ENCODE measurements at regions of chr12 and their contacts with region 1.

Region 1: GRCh38 chr12:45543906-45544315 is 185.6 kb upstream of the ARID2 start:
- DNase-seq: peak; percentile 46
- H3K4me3 Mint-ChIP-seq: no peak overlapping the region
- H3K27ac Mint-ChIP-seq: no peak overlapping the region
- H3K4me1 Mint-ChIP-seq: no peaks in the 10 kb centered on the region
- H3K27me3 Mint-ChIP-seq: peaks cover 36% of the 10 kb centered on the region

Region 2: DNA sequence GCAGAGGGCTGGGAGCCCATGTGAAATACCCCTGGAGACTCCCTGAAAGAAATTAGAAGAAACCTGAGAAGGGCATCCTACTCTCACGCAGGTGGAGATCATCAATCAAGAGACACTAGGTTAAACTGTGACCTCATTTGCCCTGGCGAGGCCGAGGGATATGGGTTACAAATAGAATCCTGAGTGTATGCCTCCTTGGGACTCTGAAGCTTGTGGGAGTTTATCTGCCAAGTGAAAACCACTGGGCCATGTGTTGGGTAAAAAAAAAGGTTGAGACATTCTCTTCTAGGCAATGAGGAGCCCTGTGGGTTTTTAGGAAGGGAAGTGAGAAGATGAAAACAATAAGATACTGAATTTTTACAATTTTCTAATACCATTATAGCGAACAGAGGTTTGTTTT is 24.9 kb after region 1 on chr12:
- intact Hi-C with region 1: no loop called
- DNase-seq: no peak
- H3K4me3 Mint-ChIP-seq: no peak overlapping the region
- H3K27ac Mint-ChIP-seq: no peak overlapping the region
- H3K4me1 Mint-ChIP-seq: no peaks in the 10 kb centered on the region
- H3K27me3 Mint-ChIP-seq: peaks cover 30% of the 10 kb centered on the region

Region 3: DNA sequence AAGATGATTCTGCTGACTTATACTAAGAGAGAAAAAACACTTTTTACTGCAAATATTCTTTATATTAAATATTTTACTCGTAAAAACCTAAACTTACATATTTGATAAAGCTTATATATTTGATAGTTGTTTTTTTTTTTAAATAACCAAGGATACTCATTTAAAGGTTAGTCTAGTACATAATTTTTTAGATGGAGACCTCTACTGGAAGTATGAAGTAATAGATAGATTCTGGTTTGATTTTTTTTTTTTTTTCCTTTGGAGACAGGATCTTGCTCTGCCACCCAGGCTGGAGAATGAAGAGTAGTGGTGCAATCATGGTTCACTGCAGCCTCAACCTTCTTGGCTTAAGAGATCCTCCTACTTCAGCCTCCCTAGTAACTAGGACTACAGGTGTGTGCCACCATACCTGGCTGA is 202.0 kb after region 1 on chr12:
- intact Hi-C with region 1: loop called (anchors 1 kb)
- DNase-seq: no peak
- H3K4me3 Mint-ChIP-seq: no peak overlapping the region
- H3K27ac Mint-ChIP-seq: no peak overlapping the region
- H3K4me1 Mint-ChIP-seq: peaks cover 39% of the 10 kb centered on the region
- H3K27me3 Mint-ChIP-seq: no peaks in the 10 kb centered on the region

Region 4: DNA sequence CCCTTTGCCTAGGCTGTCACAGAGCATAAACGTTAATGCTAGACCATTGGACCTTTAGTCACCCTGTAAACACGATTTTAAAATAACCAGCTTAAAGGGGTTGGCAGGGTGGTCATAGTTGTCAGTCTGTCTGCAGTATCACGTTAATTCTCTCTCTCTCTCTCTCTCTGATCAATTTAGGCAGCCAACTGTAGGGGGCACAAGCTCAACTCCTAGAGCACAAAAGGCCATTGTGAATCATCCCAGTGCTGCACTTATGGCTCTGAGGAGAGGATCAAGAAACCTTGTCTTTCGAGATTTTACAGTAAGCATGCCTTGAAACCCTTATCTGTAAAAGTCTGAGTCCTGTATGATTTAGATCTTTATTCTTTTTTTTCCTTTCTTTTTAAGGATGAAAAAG is 349.3 kb after region 1 on chr12:
- intact Hi-C with region 1: loop called (anchors 10 kb)
- DNase-seq: no peak
- H3K4me3 Mint-ChIP-seq: no peak overlapping the region
- H3K27ac Mint-ChIP-seq: no peak overlapping the region
- H3K4me1 Mint-ChIP-seq: peaks cover 20% of the 10 kb centered on the region
- H3K27me3 Mint-ChIP-seq: no peaks in the 10 kb centered on the region

Measured in activated T-helper 2 cell treated with anti-CD3 and anti-CD28 coated beads, Interferon-gamma antibody, Interleukin-2, Interleukin-4, amounts not matched to agents 10 μg/mL and 5 μg/mL and 100 μg/mL, durations not matched to agents 14 hours and 24 hours and 36 hours (primary cell).